ENCODE measurements at regions of chr3 and their contacts with region 1.

Region 1: GRCh38 chr3:16658004-16658920 is 53.0 kb upstream of the DAZL start:
- DNase-seq: peak; percentile 54
- H3K4me3 ChIP-seq: no peak overlapping the region
- H3K27ac ChIP-seq: no peak overlapping the region
- H3K4me1 ChIP-seq: no peaks in the 10 kb centered on the region
- H3K27me3 ChIP-seq: no peaks in the 10 kb centered on the region
- CTCF ChIP-seq: 0 out of 2 replicates have a peak, but pooled peaks have one; percentile 30

Region 2: DNA sequence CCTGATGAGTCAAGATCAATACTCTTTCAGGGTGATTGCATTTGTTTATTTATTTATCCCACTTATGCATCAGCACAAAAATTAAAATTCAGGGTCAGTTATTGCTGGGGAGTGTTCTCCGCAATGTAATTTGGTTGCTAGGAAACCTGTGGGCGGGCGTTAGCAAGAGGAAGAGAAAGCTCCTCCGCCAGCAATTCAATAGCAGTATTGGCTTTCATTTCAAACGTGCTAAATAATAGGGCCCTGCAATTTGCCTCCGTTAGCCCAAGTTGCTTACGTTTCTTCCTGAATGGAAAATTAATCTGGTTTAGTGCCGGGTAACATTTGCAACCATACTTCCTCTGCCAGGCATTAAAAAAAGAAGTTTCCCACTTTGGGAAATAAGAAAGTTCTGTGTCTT is 191.0 kb after region 1 on chr3:
- CTCF ChIA-PET with region 1: no interaction called
- POLR2A ChIA-PET with region 1: no interaction called
- intact Hi-C with region 1: no loop called
- DNase-seq: peak; percentile 43
- H3K4me3 ChIP-seq: no peak overlapping the region
- H3K27ac ChIP-seq: no peak overlapping the region
- H3K4me1 ChIP-seq: peaks cover 10% of the 10 kb centered on the region
- H3K27me3 ChIP-seq: no peaks in the 10 kb centered on the region
- CTCF ChIP-seq: no peak

Region 3: GRCh38 chr3:18098960-18099587 is 1440.8 kb after region 1 on chr3:
- CTCF ChIA-PET with region 1: no interaction called
- POLR2A ChIA-PET with region 1: interaction called, 18 read pairs
- intact Hi-C with region 1: no loop called
- DNase-seq: peak; percentile 12
- H3K4me3 ChIP-seq: no peak overlapping the region
- H3K27ac ChIP-seq: no peak overlapping the region
- H3K4me1 ChIP-seq: no peaks in the 10 kb centered on the region
- H3K27me3 ChIP-seq: no peaks in the 10 kb centered on the region
- CTCF ChIP-seq: no peak

Measured in A673 (cell line).